HEK293T (cell line): ENCODE measurements at regions of chr15 and their contacts with region 1.

Region 1: GRCh38 chr15:64566629-64567427 is 106.5 kb downstream of the ZNF609 start:
- DNase-seq: peak; percentile 6

Region 2: DNA sequence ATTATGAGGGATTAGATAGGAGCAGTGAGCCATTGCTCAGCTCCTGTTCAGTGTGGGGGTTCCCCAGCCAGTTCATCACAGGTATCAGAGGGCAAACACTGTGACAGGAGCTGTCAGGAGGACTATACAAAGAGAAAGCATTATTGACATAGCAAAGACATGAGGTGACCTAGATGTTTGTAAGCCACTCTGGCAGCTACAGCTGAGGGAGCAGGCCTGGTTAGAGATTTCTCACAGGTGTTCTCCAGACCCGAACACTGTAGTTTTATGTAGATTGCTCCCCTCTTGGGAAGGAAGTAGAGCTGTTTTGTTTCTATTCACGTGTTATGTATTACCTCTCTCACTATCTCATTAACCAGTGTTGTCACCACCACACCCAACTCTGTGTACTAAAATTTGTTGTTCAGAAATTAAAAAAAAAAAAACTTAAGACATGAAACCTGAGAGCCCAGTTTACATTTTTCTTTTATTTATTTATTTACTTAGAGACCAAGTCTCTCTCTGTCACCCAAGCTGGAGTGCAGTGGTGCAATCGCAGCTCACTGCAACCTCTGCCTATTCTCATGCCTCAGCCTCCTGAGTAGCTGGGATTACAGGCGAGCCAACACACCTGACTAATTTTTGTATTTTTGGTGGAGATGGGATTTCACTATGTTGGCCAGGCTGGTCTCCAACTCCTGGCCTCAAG is 84.9 kb after region 1 on chr15:
- CTCF ChIA-PET with region 1: interaction called, 10 read pairs
- POLR2A ChIA-PET with region 1: no interaction called
- DNase-seq: no peak